A673 (cell line): ENCODE measurements at regions of chrX and their contacts with region 1.

Region 1: DNA sequence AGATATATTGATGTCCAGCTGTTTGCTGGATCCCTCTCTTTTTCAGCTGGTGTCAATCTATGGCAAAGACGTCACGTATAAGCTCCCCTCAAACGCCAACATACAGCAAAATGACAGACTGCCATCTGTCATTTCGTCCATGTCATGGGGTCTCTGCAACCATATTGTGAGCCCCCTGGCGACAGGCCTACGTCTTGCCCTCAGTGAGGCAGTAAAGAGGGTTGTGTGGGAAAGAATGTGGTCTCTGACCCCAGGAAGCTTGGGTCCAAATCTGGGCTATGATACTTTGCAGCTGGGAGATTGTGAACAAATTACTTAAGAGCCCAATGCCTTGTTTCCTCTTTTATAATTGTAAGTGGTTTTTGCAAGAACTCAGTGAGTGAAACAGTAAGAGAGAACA is 7.4 kb downstream of the SUPT20HL2 start:
- DNase-seq: no peak
- H3K4me3 ChIP-seq: no peak overlapping the region
- H3K27ac ChIP-seq: no peak overlapping the region
- H3K4me1 ChIP-seq: no peaks in the 10 kb centered on the region
- H3K27me3 ChIP-seq: peaks cover 30% of the 10 kb centered on the region
- CTCF ChIP-seq: no peak

Region 2: DNA sequence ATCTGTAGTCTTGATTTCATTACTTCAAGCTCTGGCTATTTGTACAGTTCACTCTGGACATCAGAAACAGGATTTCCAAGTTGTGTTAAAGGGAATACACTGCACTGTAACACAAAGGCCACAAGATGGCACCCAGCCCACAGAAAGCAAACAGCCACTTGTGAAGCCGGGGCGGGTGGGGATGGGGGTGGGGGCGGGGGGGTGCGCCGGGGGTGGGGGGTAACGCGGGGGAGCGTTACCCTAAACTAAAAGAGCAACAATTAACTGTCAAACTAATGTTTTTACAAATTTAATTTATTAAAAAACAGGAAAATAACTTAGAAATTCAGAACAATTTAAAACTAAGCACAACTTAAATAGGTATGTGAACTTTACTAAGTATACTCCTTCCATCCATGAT is 611.8 kb before region 1 on chrX:
- CTCF ChIA-PET with region 1: interaction called, 13 read pairs
- POLR2A ChIA-PET with region 1: no interaction called
- intact Hi-C with region 1: no loop called
- DNase-seq: peak; percentile 75
- H3K4me3 ChIP-seq: no peak overlapping the region
- H3K27ac ChIP-seq: no peak overlapping the region
- H3K4me1 ChIP-seq: no peaks in the 10 kb centered on the region
- H3K27me3 ChIP-seq: no peaks in the 10 kb centered on the region
- CTCF ChIP-seq: peak; percentile 53

Region 3: GRCh38 chrX:24024819-24025740 is 281.4 kb before region 1 on chrX:
- CTCF ChIA-PET with region 1: no interaction called
- POLR2A ChIA-PET with region 1: no interaction called
- intact Hi-C with region 1: no loop called
- DNase-seq: peak; percentile 91
- H3K4me3 ChIP-seq: peak overlapping the region; percentile 93
- H3K27ac ChIP-seq: peak overlapping the region; percentile 95
- H3K4me1 ChIP-seq: peaks cover 4% of the 10 kb centered on the region
- H3K27me3 ChIP-seq: peaks cover 4% of the 10 kb centered on the region
- CTCF ChIP-seq: no peak

Region 4: DNA sequence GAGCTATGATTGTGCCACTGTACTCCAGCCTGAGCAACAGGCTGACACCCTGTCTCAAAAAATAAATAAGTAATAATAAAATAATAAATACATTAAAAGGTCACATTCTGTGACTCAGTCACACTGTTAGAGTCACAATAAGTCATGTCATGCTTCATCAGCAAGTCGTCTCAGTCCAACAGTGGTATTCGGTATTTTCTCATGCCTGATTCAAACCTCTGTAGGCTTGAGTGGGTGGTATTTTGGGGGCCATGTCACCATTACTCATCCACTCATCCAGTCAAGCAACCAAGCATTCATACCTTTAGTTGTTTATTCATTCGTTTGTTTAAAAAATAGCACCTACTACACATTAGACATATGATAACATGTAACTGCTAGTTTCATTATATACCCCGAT is 39.4 kb before region 1 on chrX:
- CTCF ChIA-PET with region 1: no interaction called
- POLR2A ChIA-PET with region 1: no interaction called
- intact Hi-C with region 1: no loop called
- DNase-seq: no peak
- H3K4me3 ChIP-seq: no peak overlapping the region
- H3K27ac ChIP-seq: no peak overlapping the region
- H3K4me1 ChIP-seq: no peaks in the 10 kb centered on the region
- H3K27me3 ChIP-seq: peaks cover 78% of the 10 kb centered on the region
- CTCF ChIP-seq: no peak

Region 5: GRCh38 chrX:24536551-24536950 is 230.1 kb after region 1 on chrX:
- CTCF ChIA-PET with region 1: no interaction called
- POLR2A ChIA-PET with region 1: no interaction called
- intact Hi-C with region 1: no loop called
- DNase-seq: no peak
- H3K4me3 ChIP-seq: no peak overlapping the region
- H3K27ac ChIP-seq: no peak overlapping the region
- H3K4me1 ChIP-seq: no peaks in the 10 kb centered on the region
- H3K27me3 ChIP-seq: no peaks in the 10 kb centered on the region
- CTCF ChIP-seq: no peak